ENCODE measurements at regions of chr17 and their contacts with region 1.

Region 1: DNA sequence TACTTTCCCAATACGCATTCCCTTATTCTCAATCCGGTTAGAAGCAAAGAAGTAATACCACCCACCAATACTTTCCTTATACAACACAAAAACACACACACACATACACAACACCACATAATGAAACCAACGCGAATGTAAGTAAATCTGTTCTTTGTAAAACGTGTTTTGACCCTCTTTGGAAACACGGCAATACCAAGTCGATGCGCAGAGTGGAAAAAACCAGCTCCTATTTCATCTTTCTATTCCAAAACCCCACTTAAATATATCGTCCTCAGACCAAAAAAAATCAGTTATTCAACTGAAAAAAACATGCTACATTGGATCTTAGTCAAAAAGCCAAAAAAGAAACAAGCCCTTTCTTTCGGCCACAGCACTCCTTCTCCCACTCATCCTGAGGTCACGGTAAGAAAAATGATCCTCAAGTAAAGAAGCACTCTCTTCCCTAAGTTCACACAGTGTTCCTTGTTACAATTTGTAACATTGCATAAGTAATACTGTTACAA is 31.0 kb upstream of the ARL4D start:
- DNase-seq: peak; percentile 60

Region 2: DNA sequence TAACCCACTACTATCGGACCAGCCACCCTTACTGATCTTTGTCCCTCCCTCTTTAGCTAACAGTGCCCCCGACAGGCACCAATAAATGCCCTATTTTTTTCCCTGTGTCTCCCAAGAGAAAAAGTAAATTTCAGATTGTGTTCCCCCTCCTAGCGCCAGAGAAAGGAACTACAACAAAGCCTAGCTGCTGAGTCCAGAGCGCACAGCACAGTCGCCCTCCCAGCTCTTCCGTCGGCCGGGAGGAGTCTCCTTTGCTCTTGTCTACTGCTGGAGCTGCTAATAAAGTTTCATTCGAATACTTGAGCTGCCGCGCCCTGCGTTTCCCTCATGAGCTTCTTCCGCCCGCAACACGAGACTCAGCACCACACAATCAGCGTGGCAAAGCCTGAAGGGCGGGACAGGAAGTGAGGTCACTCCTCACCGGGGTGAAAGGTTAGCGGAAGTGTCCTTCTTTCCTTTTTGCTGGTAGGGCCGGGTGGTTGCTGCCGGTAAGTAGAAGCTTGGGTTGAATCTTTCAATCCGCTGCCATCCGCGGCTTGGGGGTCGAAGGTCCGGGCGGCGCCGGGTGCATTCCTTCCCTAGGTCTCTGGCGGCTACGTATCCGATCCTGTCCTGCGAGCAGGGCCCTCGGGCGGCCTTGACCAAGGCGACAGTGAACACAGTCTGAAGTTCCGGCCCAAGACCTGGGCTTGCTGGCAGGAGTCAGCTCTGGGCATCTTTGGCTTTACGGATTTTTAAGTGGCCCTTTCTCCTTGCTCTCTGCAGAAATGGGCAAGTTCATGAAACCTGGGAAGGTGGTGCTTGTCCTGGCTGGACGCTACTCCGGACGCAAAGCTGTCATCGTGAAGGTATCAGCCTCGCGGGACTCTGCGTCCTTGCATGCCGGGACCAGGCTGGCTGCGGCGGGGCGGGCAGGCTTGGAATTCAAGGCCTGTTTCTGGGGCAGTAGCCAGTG is 369.5 kb before region 1 on chr17 and contains the start of gene RPL27:
- CTCF ChIA-PET with region 1: no interaction called
- POLR2A ChIA-PET with region 1: interaction called, 29 read pairs
- DNase-seq: peak; percentile 95

Region 3: DNA sequence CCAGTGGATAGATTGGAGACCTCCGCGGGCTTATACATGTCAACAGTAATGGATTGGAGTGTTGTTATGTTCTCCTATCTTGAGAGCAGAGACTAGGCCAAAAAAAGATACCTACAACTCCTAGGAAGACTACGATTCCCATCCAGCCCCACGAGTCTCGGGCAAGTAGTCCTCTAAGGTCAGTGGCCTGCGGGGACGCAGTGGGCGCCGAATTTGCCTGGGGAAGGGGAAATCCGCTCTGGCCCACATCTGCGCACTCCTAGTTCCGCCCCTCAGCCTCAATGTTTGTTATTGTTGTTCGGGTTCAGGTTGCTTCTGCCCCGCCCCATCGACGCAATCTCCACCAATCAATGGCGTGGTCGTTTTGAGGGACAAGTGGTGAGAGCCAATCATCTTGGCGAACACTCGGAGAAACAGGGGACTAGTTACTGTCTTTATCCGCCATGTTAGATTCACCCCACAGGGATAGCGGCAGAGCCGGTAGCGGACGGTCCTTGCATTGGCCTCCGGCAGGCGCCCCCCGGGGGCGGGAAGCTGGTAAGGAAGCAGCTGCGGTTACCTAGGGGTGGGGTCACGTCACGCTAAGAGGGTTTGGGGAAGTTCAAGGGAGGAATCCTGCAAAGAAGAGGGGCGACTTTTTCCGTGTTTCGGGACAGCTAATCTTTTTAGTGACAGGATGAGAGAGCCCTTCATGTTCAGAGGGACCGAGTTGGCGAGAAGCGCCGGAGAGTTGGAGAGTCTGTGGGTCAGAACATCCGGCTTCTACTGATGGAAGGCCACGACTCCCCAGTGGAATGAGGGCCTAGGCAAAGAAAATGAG is 196.8 kb before region 1 on chr17 and contains the start of gene NBR1:
- CTCF ChIA-PET with region 1: interaction called, 3 read pairs
- POLR2A ChIA-PET with region 1: interaction called, 21 read pairs
- DNase-seq: peak; percentile 93

Region 4: GRCh38 chr17:43338886-43339516 is 28.8 kb before region 1 on chr17:
- CTCF ChIA-PET with region 1: no interaction called
- POLR2A ChIA-PET with region 1: interaction called, 87 read pairs
- DNase-seq: no peak

Region 5: GRCh38 chr17:43406676-43407645 is 39.2 kb after region 1 on chr17:
- CTCF ChIA-PET with region 1: no interaction called
- POLR2A ChIA-PET with region 1: interaction called, 44 read pairs
- DNase-seq: no peak

Region 6: DNA sequence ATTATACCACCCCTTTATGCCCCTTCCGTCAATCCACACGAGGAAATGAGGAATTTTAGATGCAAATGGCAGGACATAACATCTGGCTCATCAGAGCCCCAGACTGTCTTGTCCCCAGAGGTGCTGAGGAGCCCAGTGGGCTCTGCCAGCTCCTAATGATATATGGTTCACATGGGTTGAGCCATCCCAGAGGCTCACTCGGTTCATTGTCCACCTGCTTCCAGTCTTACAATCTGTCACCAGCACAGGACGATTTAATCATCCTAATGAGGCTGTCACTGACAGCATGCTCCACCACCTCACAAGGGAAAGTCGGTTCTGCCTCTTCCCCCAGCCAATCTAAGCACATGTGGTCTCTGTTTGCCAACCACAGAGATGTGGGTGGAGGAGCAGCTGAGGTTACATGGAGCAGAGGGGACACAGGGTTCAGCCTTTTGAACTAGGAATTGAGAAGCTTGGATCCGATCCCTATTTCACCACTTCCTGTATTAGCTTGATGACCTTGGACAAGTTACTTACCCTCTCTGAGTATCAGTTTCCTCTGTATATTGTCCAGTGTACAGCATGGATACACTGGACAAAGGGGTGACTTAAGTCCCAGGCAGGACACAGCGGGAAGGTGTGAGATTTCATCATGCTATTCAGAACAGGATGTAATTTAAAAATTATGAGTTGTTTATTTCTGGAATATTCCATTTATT is 89.0 kb after region 1 on chr17:
- CTCF ChIA-PET with region 1: no interaction called
- POLR2A ChIA-PET with region 1: interaction called, 14 read pairs
- DNase-seq: no peak

Region 7: DNA sequence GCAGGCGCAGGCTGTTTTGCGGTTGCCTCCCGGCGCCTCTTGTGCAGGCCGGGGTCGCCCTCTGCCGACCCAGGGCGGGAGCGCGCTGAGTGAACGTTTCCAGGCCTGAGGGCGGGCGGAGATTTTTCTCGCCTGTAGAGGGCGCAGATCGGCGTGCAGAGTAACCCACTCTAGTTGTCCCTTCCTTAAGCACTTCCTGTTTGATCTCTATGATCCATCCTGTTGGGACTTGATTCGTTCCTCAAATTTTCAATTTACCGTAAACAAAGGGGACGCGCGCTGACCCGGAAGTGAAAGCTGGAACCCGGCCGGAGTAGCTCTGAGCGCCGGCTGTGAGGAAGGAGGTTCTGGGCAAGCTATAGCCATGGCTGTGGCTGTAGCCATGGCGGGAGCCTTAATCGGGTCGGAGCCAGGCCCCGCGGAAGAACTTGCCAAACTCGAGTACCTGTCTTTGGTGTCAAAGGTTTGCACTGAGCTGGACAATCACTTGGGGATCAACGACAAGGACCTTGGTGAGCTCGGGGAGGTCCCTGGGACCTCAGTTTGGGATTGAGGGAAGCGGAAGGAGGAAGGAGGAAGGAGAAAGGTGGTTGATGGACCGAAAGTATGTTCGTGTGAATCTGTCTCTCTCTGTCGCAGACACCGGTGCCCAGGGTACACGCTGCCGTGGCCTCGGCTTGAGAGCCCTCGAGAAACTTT is 116.0 kb after region 1 on chr17 and contains the start of gene DHX8:
- CTCF ChIA-PET with region 1: interaction called, 19 read pairs
- POLR2A ChIA-PET with region 1: interaction called, 117 read pairs
- DNase-seq: peak; percentile 91